B cell (primary cell): ENCODE measurements at regions of chr19 and their contacts with region 1.

Region 1: DNA sequence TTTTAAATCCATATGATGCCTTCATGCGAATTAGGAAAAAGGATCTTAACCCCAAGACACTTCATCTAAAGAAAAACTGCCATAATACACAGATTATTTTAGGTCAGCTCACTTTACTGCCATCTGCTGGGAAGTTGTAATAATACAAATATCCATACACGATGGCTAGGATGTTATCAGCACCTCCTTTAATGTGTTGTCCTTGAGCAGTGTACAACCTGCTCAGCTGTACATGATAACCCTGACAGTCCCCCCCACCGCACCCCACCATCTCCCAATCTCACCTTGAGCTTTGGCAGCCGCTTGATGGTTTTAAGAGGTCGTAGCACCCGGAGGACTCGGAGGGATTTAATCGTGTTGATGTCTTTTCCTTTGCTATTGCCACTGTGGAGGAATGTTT is 112.2 kb downstream of the IER2 start:
- DNase-seq: peak; percentile 76
- ATAC-seq: peak; percentile 22
- H3K4me3 ChIP-seq: no peak overlapping the region
- H3K4me3 Mint-ChIP-seq: no peak overlapping the region
- H3K27ac ChIP-seq: no peak overlapping the region
- H3K27ac Mint-ChIP-seq: peak overlapping the region; percentile 67
- H3K4me1 ChIP-seq: peaks cover 16 to 20% of the 10 kb centered on the region in 2 donors
- H3K4me1 Mint-ChIP-seq: peaks cover 19% of the 10 kb centered on the region
- H3K27me3 ChIP-seq: peaks cover 0 to 7% (median 1%) of the 10 kb centered on the region in 4 experiments
- H3K27me3 Mint-ChIP-seq: peaks cover 15% of the 10 kb centered on the region
- CTCF ChIP-seq: peak; percentile 71

Region 2: GRCh38 chr19:12974301-12975220 is 287.9 kb before region 1 on chr19:
- CTCF ChIA-PET with region 1: interaction called, 16 read pairs
- POLR2A ChIA-PET with region 1: no interaction called
- intact Hi-C with region 1: loop called (anchors 1 kb)
- DNase-seq: no peak
- ATAC-seq: no peak
- H3K4me3 ChIP-seq: no peak overlapping the region
- H3K4me3 Mint-ChIP-seq: no peak overlapping the region
- H3K27ac ChIP-seq: no peak overlapping the region
- H3K27ac Mint-ChIP-seq: no peak overlapping the region
- H3K4me1 ChIP-seq: peaks cover 0 to 5% of the 10 kb centered on the region in 2 donors
- H3K4me1 Mint-ChIP-seq: peaks cover 6% of the 10 kb centered on the region
- H3K27me3 ChIP-seq: peaks cover 0 to 14% (median 1%) of the 10 kb centered on the region in 4 experiments
- H3K27me3 Mint-ChIP-seq: peaks cover 12% of the 10 kb centered on the region
- CTCF ChIP-seq: no peak

Region 3: DNA sequence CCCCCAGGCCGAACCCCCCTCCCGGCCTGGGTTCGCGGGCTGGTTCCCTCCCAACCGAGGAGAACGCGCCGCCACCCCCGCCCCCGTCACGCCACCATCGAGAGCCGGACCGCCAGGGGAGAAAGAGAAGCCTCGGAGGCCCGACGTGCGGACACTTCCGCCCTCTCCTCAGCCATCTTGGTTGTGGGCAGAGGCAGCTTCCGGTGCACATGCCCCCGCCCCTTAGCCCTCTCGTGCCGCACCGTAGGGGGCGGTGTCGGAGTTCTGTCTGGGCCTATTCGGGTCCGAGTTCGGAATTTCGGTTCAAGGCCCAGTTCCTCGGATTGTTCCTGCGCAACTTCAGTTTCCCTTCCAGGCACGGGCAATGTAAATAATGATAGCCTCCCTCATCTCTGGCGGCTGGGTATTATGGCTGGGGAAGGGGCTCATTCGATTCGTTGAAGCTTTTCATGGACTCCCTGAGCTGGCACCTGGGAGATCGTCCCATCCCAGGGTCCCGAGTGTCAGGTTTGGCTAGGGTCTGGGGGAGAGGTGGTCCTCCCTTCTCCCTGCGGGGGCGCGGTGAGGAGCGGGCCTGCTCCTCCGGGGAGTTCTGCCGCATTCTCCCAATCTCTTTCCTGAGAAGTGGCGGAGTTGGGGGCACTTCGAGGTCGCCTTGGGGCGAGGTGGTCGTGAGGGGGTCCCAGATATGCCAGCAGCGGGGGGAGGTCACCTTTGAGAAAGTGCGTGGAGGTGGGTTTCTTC is 112.1 kb before region 1 on chr19 and contains the starts of genes IER2 and STX10:
- CTCF ChIA-PET with region 1: interaction called, 31 read pairs
- POLR2A ChIA-PET with region 1: interaction called, 8 read pairs
- intact Hi-C with region 1: loop called (anchors 1 kb)
- DNase-seq: peak; percentile 96
- ATAC-seq: peak; percentile 53
- H3K4me3 ChIP-seq: peak within 1 kb of the TSS; percentile 82 to 100 (median 98)
- H3K4me3 Mint-ChIP-seq: peak within 1 kb of the TSS; percentile 92
- H3K27ac ChIP-seq: peak within 1 kb of the TSS; percentile 87 to 96
- H3K27ac Mint-ChIP-seq: peak within 1 kb of the TSS; percentile 94
- H3K4me1 ChIP-seq: peaks cover 9 to 32% of the 10 kb centered on the region in 2 donors
- H3K4me1 Mint-ChIP-seq: peaks cover 33% of the 10 kb centered on the region
- H3K27me3 ChIP-seq: no peaks in the 10 kb centered on the region
- H3K27me3 Mint-ChIP-seq: no peaks in the 10 kb centered on the region
- CTCF ChIP-seq: peak; percentile 66
- total RNA-seq, gene IER2: 181 and 189 TPM in 2 replicates
- total RNA-seq, gene STX10: 48.4 and 59.0 TPM in 2 replicates

Region 4: DNA sequence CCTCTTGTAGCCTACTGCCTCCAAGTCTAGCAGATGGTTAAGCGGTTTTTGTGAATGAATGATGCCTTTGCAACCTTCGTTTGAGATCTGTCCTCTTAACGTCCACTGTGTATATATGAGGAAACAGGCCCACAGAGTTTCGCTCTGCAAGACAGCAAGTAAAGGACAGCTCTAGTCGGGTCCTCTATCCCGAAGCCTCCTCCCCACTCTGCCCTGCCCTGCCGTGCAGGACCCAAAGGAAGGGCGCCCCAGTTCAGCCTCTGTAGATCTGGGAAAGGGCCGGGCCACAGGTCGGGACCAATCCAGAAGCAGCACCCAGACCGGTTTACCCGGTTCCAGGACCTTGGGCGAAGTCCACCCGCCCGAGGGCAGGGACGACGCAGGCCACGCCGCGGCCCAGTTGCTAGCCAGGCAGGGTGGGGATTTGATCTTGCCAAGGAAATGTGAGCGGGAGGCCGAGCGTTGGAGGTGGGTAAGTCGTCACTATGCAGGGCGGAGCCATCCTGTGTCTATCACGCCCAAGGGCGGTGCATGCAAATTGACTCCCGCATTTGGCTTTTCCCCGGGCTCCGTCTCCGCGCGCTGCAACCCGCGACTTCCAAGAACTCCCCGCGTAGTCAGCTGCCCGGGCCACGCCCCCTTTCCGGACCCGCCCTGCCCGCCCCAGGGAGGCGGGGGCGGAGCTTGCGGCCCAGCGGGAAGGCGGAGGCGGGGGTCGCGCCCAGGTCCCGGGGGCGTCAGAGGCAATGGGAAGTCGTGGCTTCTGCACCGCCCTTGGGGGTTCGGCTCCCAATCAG is 99.7 kb before region 1 on chr19:
- CTCF ChIA-PET with region 1: interaction called, 10 read pairs
- POLR2A ChIA-PET with region 1: interaction called, 9 read pairs
- intact Hi-C with region 1: no loop called
- DNase-seq: peak; percentile 85
- ATAC-seq: peak; percentile 42
- H3K4me3 ChIP-seq: peak overlapping the region; percentile 24 to 71 (median 61)
- H3K4me3 Mint-ChIP-seq: peak overlapping the region; percentile 92
- H3K27ac ChIP-seq: peak overlapping the region; percentile 85 to 94
- H3K27ac Mint-ChIP-seq: peak overlapping the region; percentile 97
- H3K4me1 ChIP-seq: peaks cover 84 to 96% of the 10 kb centered on the region in 2 donors
- H3K4me1 Mint-ChIP-seq: peaks cover 62% of the 10 kb centered on the region
- H3K27me3 ChIP-seq: no peaks in the 10 kb centered on the region
- H3K27me3 Mint-ChIP-seq: no peaks in the 10 kb centered on the region
- CTCF ChIP-seq: no peak

Region 5: GRCh38 chr19:13212759-13213330 is 49.6 kb before region 1 on chr19:
- CTCF ChIA-PET with region 1: interaction called, 15 read pairs
- POLR2A ChIA-PET with region 1: interaction called, 3 read pairs
- intact Hi-C with region 1: loop called (anchors 1 kb)
- DNase-seq: peak; percentile 77
- ATAC-seq: no peak
- H3K4me3 ChIP-seq: no peak overlapping the region
- H3K4me3 Mint-ChIP-seq: peak overlapping the region; percentile 44
- H3K27ac ChIP-seq: no peak overlapping the region
- H3K27ac Mint-ChIP-seq: peak overlapping the region; percentile 29
- H3K4me1 ChIP-seq: peaks cover 41 to 54% of the 10 kb centered on the region in 2 donors
- H3K4me1 Mint-ChIP-seq: peaks cover 62% of the 10 kb centered on the region
- H3K27me3 ChIP-seq: no peaks in the 10 kb centered on the region
- H3K27me3 Mint-ChIP-seq: no peaks in the 10 kb centered on the region
- CTCF ChIP-seq: peak; percentile 69